ENCODE measurements at regions of chr6 and their contacts with region 1.

Region 1: DNA sequence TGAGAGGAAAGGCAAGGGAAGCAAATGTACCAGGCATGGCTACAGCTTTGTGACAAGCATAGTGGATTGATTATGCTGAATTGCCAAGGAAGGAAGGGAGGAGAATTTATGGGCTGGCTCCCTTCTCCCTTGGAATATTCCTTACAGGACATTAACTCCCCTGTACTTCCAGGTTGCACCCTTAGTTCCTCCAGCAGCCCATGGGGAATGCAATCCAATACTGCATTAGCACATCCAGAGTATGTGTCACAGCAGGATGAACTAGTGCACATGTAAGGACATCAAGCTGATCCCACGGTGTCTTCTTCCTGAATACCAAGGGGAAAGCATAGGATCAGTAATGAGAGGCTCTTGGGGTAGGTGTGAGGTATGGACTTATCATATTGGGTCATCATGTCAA is 390.7 kb upstream of the POU3F2 start:
- DNase-seq: no peak
- H3K4me3 ChIP-seq: no peak overlapping the region
- H3K27ac ChIP-seq: no peak overlapping the region
- H3K4me1 ChIP-seq: no peaks in the 10 kb centered on the region
- H3K27me3 ChIP-seq: no peaks in the 10 kb centered on the region
- CTCF ChIP-seq: no peak
- POLR2A ChIP-seq: no peak

Region 2: DNA sequence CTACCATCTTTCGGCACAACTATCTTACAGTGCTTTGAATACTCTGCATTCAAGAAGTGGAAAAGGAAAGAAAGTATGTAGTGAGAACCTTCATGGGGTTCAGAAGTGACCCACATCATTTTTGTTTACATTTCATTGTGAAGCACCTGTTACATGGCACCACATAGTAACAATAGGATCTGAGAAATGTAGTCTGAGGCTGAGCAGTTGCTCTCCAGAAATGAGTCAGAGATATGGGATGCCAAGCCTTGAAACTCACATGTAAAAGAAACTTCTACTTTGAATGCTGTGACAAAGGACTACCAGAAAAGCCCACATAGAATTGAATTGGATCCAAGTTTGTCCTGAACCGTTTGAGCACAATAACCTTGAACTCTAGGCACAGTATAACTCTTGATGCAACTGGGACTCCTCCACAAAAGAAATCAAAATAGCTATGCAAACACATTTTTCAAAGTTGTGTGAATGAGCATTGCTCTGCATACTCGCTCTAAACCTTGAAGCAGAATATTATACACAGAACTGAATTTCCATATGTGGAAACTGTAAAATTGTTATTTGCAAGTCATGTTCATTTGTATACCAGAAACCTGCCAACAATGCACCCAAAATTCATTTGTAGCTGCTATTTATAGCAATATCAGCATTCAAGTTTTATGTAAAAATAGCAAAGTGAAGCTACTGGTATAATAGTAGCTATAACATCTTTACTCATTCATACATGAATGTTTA is 10.1 kb before region 1 on chr6:
- intact Hi-C with region 1: loop called (anchors 1 kb)
- DNase-seq: no peak
- H3K4me3 ChIP-seq: no peak overlapping the region
- H3K27ac ChIP-seq: no peak overlapping the region
- H3K4me1 ChIP-seq: no peaks in the 10 kb centered on the region
- H3K27me3 ChIP-seq: no peaks in the 10 kb centered on the region
- CTCF ChIP-seq: no peak
- POLR2A ChIP-seq: no peak